ENCODE measurements at regions of chr3 and their contacts with region 1.

Region 1: GRCh38 chr3:132641837-132642538 is 17.6 kb downstream of the ACAD11 start:
- DNase-seq: no peak
- ATAC-seq: peak; percentile 57

Region 2: GRCh38 chr3:132535575-132536441 is 106.2 kb before region 1 on chr3:
- intact Hi-C with region 1: loop called (anchors 5 kb)
- DNase-seq: peak; percentile 31 to 59
- ATAC-seq: peak; percentile 67

Region 3: DNA sequence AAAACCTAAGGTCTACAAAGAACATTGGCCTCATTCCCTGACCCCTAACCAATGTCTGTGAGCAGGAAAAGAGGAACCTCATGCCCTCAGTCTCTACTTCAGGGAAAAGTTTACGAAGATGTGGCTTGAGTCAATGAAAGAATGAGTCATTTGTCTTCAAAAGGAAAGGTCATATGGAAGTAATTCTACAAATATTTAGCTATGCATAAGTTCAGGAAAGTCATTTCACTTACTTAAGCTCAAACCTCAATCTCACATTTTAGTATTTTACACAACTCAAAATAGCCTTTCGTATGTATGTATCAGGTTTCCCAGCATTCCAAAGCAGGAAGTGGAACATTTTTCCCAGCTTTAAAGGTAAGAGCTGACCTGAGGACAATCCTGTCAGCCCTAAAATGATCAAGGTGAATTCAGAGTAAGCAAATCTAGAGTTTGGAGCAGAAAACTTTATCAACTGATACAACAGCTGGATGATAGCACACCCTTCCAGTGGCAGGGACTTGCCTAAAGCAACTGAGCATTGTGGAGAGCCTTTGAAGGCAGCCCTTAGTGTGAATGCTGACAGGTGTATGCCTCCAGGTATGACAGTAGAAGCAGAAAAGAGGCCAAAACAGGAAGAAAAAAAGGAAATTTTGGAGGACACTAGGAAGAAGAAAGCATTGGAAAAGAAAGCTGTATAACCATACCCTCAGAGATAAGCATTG is 98.8 kb before region 1 on chr3:
- intact Hi-C with region 1: loop called (anchors 5 kb)
- DNase-seq: no peak
- ATAC-seq: peak; percentile 63

Region 4: GRCh38 chr3:132595014-132595413 is 47.0 kb before region 1 on chr3:
- intact Hi-C with region 1: no loop called
- DNase-seq: no peak
- ATAC-seq: no peak

Region 5: DNA sequence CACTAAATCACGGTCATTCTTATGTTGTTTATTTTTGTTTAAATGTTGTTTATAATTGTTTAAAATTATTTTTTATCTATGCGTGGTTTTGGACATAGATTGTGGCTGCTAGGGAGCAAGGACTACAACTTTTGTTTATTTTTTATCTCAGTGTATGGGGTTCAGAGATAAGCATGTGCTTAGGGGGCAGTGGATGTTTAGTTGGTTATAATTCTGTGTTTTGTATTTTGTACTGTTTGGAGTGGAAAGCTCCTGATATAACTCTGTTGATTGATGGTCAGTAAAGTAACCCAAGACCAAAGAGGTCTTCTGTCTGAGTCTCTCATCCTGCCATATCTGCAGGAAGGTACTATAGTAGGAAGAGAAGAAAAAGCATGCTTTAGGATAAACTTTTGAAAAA is 116.8 kb after region 1 on chr3:
- intact Hi-C with region 1: no loop called
- DNase-seq: no peak
- ATAC-seq: no peak

Region 6: DNA sequence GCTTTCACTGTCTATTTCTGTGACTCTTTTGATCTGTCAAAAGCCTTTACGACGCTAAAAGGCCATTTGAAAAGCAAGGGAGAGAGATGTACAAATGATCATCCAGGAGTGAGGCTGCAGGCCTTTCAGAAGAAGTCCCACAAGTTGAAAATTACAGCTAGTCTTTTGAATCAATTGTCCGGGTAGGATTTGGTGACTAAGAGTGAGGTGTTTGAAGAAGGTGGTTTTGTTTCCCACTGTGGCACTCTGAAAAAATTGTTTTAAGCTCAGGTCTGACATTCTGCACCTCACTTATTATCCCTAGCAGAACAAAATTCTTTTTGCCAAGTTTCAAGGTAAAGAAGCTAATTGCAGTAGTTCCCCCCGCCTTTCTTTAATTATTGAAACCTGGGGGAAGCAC is 345.4 kb after region 1 on chr3:
- intact Hi-C with region 1: no loop called
- DNase-seq: no peak
- ATAC-seq: no peak